Activated CD4-positive, alpha-beta T cell treated with anti-CD3 and anti-CD28 coated beads for 36 hours (primary cell): ENCODE measurements at regions of chr6 and their contacts with region 1.

Region 1: GRCh38 chr6:31546962-31547726 is at the start of gene NFKBIL1:
- DNase-seq: peak; percentile 95
- ATAC-seq: peak; percentile 77
- H3K4me3 Mint-ChIP-seq: peak within 1 kb of the TSS; percentile 89
- H3K27ac Mint-ChIP-seq: peak within 1 kb of the TSS; percentile 97
- H3K4me1 Mint-ChIP-seq: peaks cover 51% of the 10 kb centered on the region
- H3K27me3 Mint-ChIP-seq: no peaks in the 10 kb centered on the region
- total RNA-seq, gene NFKBIL1: 18.1 to 19.0 TPM

Region 2: DNA sequence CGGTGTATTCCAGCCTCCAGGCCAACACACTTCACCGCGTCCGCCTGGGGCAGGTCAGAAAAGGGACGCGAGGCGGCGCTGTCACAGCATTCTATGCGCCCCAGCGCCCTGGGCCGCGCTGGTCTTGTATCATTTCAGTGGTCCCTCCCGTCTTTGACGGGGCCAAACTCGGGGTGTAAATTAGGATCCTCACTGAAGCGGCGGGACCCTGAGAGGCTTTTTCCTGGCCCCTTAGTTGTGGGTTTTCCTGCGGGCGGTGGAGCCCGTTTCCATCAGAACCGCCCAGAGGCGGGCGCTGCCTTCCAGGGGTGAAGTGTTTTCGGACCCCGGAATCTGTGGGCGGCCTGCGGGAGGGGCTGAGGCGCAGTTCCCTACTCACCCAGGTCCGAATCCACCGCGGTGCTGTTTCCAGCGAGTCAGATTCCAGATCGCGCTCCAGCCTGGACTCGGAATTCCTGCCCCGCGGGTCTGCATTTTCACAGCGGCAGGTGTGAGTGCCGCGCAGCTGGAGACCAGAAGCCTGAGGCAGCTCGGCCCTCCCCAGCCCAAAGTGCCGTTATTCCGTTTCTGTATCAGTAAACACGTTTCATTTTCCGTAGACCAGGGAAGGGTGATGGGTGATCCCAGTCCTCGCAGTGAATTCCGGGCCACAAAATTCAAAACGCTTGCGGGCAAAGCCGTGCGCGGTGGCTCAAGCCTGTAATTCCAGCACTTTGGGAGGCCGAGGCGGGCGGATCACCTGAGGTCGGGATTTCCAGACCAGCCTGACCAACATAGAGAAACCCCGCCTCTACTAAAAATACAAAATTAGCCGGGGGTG is 53.1 kb before region 1 on chr6:
- CTCF ChIA-PET with region 1: interaction called, 41 read pairs
- POLR2A ChIA-PET with region 1: interaction called, 4 read pairs
- intact Hi-C with region 1: loop called (anchors 1 to 2 kb)
- DNase-seq: peak; percentile 91
- ATAC-seq: peak; percentile 58
- H3K4me3 Mint-ChIP-seq: peak overlapping the region; percentile 79
- H3K27ac Mint-ChIP-seq: peak overlapping the region; percentile 90
- H3K4me1 Mint-ChIP-seq: peaks cover 43% of the 10 kb centered on the region
- H3K27me3 Mint-ChIP-seq: no peaks in the 10 kb centered on the region

Region 3: GRCh38 chr6:31568537-31568961 is 21.4 kb after region 1 on chr6:
- CTCF ChIA-PET with region 1: interaction called, 278 read pairs
- POLR2A ChIA-PET with region 1: interaction called, 5 read pairs
- intact Hi-C with region 1: loop called in 1 of 2 experiments (anchors 1 kb)
- DNase-seq: peak; percentile 83
- ATAC-seq: peak; percentile 60
- H3K4me3 Mint-ChIP-seq: peak overlapping the region; percentile 58
- H3K27ac Mint-ChIP-seq: peak overlapping the region; percentile 89
- H3K4me1 Mint-ChIP-seq: peaks cover 86% of the 10 kb centered on the region
- H3K27me3 Mint-ChIP-seq: peaks cover 3% of the 10 kb centered on the region

Region 4: DNA sequence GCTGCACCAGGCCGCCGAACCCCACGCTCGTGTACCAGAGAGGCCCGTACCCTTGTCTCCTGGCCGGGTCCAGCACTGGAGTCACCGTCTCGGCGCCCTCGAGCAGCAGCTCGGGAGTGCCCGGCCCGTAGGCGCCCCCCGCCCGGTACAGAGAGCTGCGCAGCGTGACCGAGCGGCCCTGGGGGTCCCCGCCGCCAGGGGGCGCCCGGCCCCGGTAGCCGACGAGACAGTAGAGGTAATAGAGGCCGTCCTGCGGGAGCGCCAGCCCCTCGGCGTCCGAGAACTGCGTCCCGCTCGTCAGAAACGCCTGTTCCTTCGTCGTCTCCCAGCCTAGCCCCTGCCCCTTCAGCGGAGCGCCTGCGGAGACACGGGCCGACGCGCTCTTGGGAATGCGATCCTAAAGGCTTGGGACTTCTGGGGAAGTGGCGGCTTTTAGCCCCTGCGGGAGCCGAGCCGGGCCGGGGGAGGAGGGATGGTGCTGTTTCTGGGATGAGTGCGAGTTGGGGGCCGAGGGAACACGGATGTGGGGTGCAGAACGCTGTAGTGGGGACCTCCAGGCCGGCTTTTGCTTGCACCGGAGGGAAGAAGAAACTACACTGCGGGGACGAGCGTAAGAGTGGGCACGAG is 33.8 kb after region 1 on chr6:
- CTCF ChIA-PET with region 1: interaction called, 278 read pairs
- POLR2A ChIA-PET with region 1: interaction called, 29 read pairs
- intact Hi-C with region 1: loop called (anchors 1 to 2 kb)
- DNase-seq: peak; percentile 94
- ATAC-seq: peak; percentile 67
- H3K4me3 Mint-ChIP-seq: peak overlapping the region; percentile 97
- H3K27ac Mint-ChIP-seq: peak overlapping the region; percentile 97
- H3K4me1 Mint-ChIP-seq: peaks cover 56% of the 10 kb centered on the region
- H3K27me3 Mint-ChIP-seq: no peaks in the 10 kb centered on the region

Region 5: DNA sequence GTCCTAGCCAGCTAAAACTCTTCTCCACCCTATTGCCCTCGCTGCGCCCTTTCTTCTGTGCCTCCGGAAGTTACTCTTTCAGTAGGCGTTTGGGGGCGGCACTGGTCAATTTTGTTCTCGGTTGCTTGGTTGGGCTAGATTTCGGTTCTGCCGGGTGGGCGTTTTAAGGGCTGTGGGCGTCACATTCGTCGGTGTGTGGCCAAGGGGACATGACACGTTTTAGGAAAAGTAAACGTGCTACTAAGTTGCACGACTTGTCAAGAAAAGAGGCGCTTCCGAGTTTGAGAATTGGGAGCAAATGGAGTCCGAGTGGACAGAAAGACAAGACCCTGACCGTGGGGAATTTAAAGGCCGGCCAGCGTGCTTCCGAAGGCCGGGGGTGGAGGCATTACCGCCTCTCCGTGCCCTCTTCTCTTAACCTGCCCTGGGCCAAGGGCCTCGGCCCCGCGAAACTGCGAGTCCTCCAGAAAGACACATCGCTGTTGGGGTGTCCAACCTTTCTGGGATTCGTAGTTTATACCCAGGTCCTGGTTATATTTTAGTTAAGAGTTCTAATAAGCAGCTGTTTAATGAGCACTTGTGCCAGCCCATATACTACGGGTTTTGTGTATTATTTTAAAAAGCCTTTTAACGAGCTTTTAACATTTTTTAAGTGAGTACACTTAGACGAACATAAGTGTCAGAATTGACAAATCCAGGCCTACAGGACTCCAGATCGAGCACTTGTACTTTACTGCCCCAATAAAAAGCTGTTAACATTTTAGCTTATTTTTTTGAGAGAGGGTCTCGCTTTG is 106.0 kb after region 1 on chr6:
- CTCF ChIA-PET with region 1: interaction called, 4 read pairs
- POLR2A ChIA-PET with region 1: interaction called, 5 read pairs
- intact Hi-C with region 1: loop called in 1 of 2 experiments (anchors 1 kb)
- DNase-seq: peak; percentile 91
- ATAC-seq: peak; percentile 71
- H3K4me3 Mint-ChIP-seq: peak overlapping the region; percentile 88
- H3K27ac Mint-ChIP-seq: peak overlapping the region; percentile 96
- H3K4me1 Mint-ChIP-seq: peaks cover 38% of the 10 kb centered on the region
- H3K27me3 Mint-ChIP-seq: no peaks in the 10 kb centered on the region

Region 6: DNA sequence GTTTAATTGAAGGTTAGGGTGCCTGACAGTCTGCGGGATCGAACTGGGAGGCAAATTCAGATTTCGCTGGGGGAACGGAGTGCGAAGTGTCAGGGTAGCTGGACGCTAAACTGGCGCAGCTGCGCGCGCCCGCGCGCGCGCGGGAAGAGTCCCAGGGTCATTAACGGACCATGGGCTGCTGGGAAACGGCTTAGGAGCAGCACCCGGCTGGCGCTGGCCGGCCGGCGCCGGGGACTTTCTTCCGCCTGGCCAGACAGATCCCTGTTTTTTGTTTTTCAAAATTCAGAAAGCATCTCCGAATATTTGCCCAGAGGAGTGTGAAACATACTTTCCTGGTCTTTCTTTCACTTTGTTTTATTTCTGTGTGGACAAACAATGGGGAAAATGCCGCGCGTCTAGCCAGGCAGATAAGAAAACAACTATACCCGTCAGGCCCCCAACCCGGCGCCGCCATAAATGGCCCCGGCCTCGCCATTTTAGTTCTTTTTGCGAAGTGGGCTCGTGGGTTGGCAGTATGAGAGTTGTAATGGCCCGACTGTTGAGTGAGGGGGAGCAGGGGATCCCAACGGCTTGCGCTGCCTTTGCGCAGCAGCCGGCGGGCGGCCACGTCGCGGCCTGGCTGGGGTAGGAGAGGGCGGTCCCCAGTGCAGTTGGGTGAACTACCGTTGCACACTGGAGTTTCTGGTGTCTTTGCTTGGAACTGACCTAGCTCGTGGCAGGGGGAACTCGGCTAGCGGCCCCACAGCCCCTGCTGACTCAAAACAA is 287.5 kb after region 1 on chr6:
- CTCF ChIA-PET with region 1: interaction called, 4 read pairs
- POLR2A ChIA-PET with region 1: no interaction called
- intact Hi-C with region 1: loop called (anchors 2 to 5 kb)
- DNase-seq: peak; percentile 85
- ATAC-seq: peak; percentile 63
- H3K4me3 Mint-ChIP-seq: peak overlapping the region; percentile 90
- H3K27ac Mint-ChIP-seq: peak overlapping the region; percentile 95
- H3K4me1 Mint-ChIP-seq: peaks cover 40% of the 10 kb centered on the region
- H3K27me3 Mint-ChIP-seq: no peaks in the 10 kb centered on the region

Region 7: DNA sequence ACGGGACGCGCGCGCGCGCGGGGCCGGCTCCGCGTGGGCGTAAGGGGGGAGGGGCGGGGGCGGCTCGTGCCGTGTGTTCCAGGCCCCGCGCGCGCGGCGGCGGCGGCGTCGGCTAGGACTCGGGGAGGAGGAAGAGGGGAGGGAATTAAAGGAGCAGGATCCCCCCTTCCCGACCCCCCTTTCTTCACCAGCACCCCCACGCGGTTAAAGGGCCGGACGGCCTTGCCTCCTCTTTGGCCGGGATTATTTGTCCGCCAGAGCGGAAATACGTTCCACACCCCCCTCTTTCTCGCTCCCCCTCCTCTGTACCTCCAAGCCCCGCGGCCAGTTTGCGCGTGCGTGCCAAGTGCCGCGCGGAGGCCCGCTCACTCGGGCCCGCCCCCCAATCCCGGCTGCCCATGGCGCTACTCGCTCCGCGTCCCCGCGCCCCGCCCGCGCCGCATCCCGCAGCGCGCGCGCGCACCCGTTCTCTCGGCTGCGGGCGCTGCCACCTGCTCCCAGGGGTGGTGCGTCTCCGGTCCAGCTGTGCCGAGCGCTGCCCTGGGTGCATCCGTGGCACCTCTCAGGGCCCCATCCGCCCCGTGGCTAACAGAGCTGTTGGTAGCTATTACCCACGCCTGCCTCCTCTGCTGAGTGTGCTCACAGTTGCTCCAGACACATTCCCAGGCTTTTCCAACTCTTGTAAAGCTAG is 355.0 kb after region 1 on chr6 and contains the start of gene ZBTB12:
- CTCF ChIA-PET with region 1: no interaction called
- POLR2A ChIA-PET with region 1: no interaction called
- intact Hi-C with region 1: loop called in 1 of 2 experiments (anchors 2 kb)
- DNase-seq: peak; percentile 92
- ATAC-seq: peak; percentile 63
- H3K4me3 Mint-ChIP-seq: peak within 1 kb of the TSS; percentile 69
- H3K27ac Mint-ChIP-seq: peak within 1 kb of the TSS; percentile 78
- H3K4me1 Mint-ChIP-seq: peaks cover 25% of the 10 kb centered on the region
- H3K27me3 Mint-ChIP-seq: no peaks in the 10 kb centered on the region
- total RNA-seq, gene ZBTB12: 1.9 to 2.4 TPM